SK-N-SH (cell line): ENCODE measurements at regions of chr22 and their contacts with region 1.

Region 1: DNA sequence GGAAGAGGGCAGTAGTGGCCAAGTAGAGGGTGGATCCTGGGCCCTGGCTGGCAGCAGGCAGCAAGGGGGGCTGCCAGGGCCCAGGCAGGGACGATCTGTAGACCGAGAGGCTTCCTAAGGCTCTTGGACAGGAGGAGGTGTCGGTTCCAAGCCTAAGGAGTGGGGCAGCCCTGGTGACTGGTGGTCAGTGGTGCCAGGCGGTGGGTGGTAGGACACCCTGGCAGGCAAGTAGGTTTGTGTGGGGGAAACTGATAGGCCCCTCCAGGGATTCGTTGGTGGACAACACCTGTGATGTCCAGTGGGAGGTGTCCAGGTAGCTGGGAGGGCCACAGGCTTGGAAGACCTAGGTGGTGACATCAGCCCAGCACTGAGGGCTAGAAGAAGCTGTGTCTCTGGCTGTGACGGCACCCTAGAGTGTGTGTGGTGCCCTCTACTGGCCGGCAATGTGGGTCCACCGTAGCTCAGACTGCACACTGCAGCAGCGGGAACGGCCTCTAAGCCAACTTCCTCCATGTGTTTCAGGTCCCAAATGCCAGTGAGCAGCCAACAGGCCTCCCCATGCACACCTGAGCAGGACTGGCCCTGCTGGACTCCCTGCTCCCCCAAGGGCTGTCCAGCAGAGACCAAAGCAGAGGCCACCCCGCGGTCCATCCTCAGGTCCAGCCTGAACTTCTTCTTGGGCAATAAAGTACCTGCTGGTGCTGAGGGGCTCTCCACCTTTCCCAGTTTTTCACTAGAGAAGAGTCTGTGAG is 9.4 kb upstream of the SAMM50 start:
- DNase-seq: peak; percentile 79
- H3K4me3 ChIP-seq: no peak overlapping the region; a peak in 1 of 4 replicates
- H3K27ac ChIP-seq: no peak overlapping the region
- H3K4me1 ChIP-seq: no peaks in the 10 kb centered on the region; a peak in 1 of 4 replicates
- H3K27me3 ChIP-seq: no peaks in the 10 kb centered on the region
- CTCF ChIP-seq: peak; percentile 79
- EP300 ChIP-seq: no peak
- RAD21 ChIP-seq: peak; percentile 67

Region 2: DNA sequence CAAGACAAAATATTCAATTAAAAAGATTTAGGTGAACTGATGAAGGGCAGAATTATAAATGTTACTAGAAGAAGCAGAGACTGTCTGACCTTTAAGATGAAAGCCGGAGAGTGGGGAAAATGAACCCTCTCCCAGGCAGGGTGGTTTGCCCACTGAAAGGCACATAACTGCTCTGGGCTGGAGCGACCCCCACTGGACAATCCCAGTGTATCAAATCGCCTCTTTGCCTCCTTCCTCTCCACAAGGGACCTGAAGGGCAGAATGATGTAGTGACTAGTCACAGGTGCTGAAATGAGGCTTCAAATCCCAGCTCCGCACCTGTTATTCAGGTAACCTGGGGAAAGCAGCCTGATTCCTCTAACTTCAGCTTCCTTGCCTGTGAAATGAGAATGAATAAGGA is 202.7 kb before region 1 on chr22:
- CTCF ChIA-PET with region 1: no interaction called
- POLR2A ChIA-PET with region 1: no interaction called
- DNase-seq: no peak
- H3K4me3 ChIP-seq: no peak overlapping the region
- H3K27ac ChIP-seq: no peak overlapping the region
- H3K4me1 ChIP-seq: no peaks in the 10 kb centered on the region
- H3K27me3 ChIP-seq: no peaks in the 10 kb centered on the region
- CTCF ChIP-seq: peak; percentile 34
- EP300 ChIP-seq: no peak
- RAD21 ChIP-seq: peak; percentile 26; the same call in 1 of the 2 replicates

Region 3: DNA sequence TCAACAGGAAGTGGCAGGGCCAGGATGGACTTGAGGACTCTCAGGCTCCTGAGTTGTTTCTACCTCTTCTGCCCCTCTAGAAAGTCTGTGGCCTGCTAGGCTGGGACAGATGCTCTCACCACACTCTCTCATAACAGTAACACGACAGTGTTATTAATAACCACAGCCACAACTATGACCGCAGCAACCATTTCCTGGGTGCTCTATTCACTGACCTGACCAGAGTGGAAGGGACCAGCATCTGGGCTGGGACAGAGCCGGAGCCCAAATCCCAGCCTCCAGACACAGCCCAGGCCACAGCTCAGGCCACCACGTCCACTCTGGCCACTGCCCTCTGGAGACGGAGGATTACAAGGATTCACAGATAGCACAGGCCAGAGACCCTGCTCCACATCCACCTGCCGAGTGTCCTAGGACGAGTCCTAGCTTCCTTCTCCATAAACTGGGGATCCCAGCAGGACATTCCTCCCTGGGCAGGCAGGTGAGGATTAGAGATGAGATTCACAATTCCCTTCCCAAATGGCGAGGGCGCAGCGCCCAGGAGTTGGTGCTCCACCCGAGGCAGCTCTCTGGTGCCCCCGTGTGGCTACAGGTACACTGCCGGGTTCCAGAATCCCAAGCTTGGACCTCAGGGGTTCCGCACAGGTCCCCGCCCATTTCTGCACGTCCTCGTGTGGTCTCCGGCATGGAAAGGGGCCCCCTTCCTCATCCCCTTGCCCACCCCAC is 61.0 kb before region 1 on chr22:
- CTCF ChIA-PET with region 1: interaction called, 21 read pairs
- POLR2A ChIA-PET with region 1: no interaction called
- DNase-seq: peak; percentile 75
- H3K4me3 ChIP-seq: no peak overlapping the region; a peak in 1 of 4 replicates
- H3K27ac ChIP-seq: no peak overlapping the region
- H3K4me1 ChIP-seq: no peaks in the 10 kb centered on the region
- H3K27me3 ChIP-seq: no peaks in the 10 kb centered on the region; the same call in 1 of the 2 replicates
- CTCF ChIP-seq: peak; percentile 62
- EP300 ChIP-seq: no peak
- RAD21 ChIP-seq: peak; percentile 63

Region 4: GRCh38 chr22:43897751-43898261 is 48.0 kb before region 1 on chr22:
- CTCF ChIA-PET with region 1: interaction called, 11 read pairs
- POLR2A ChIA-PET with region 1: interaction called, 3 read pairs
- DNase-seq: no peak
- H3K4me3 ChIP-seq: no peak overlapping the region
- H3K27ac ChIP-seq: peak overlapping the region in 1 of 2 experiments; percentile 74; a peak in 2 of 4 replicates
- H3K4me1 ChIP-seq: peaks cover 0 to 20% of the 10 kb centered on the region in 2 experiments; a peak in 2 of 4 replicates
- H3K27me3 ChIP-seq: no peaks in the 10 kb centered on the region
- CTCF ChIP-seq: no peak
- EP300 ChIP-seq: peak in 1 of 2 experiments; percentile 50; a peak in 1 of 4 replicates
- RAD21 ChIP-seq: no peak

Region 5: GRCh38 chr22:43905681-43906080 is 40.1 kb before region 1 on chr22:
- CTCF ChIA-PET with region 1: interaction called, 12 read pairs
- POLR2A ChIA-PET with region 1: no interaction called
- DNase-seq: no peak
- H3K4me3 ChIP-seq: no peak overlapping the region
- H3K27ac ChIP-seq: no peak overlapping the region
- H3K4me1 ChIP-seq: peaks cover 0 to 13% of the 10 kb centered on the region in 2 experiments; a peak in 2 of 4 replicates
- H3K27me3 ChIP-seq: peaks cover 18% of the 10 kb centered on the region; the same call in 1 of the 2 replicates
- CTCF ChIP-seq: no peak
- EP300 ChIP-seq: no peak
- RAD21 ChIP-seq: no peak

Region 6: DNA sequence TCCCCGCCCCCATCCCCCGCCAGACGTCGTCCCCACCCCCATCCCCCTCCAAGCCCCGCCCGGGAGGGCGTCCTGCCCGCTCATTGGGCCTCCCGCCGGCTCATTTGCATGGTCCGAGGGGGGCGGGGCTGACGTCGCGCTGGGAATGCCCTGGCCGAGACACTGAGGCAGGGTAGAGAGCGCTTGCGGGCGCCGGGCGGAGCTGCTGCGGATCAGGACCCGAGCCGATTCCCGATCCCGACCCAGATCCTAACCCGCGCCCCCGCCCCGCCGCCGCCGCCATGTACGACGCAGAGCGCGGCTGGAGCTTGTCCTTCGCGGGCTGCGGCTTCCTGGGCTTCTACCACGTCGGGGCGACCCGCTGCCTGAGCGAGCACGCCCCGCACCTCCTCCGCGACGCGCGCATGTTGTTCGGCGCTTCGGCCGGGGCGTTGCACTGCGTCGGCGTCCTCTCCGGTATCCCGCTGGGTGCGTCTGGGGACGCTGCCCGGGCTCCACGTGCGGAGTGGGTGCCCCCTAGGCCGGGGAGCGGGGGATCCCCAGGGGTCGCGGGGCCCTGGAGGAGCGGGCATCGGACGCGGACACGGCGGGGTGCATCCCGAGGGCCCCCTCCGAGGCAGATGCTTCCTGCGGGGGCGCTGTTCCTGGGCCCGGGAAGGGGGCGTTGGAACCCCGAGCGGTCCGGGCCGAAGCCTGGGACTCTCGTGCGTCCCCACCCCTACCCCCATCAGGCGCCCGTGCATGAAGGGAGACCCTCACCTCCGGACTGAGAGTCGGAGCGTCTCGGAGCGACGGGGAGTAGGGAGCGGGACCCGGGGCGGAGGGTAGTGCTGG is 22.0 kb before region 1 on chr22 and contains the start of gene PNPLA3:
- CTCF ChIA-PET with region 1: interaction called, 23 read pairs
- POLR2A ChIA-PET with region 1: no interaction called
- DNase-seq: peak; percentile 99
- H3K4me3 ChIP-seq: peak within 1 kb of the TSS; percentile 58 to 73
- H3K27ac ChIP-seq: peak within 1 kb of the TSS; percentile 29 to 50; a peak in 3 of 4 replicates
- H3K4me1 ChIP-seq: peaks cover 16 to 19% of the 10 kb centered on the region in 2 experiments; a peak in 3 of 4 replicates
- H3K27me3 ChIP-seq: no peaks in the 10 kb centered on the region
- CTCF ChIP-seq: peak; percentile 54
- EP300 ChIP-seq: no peak
- RAD21 ChIP-seq: no peak
- polyA plus RNA-seq, gene PNPLA3: 2.4 and 3.2 TPM in 2 replicates

Region 7: GRCh38 chr22:43931771-43932170 is 14.0 kb before region 1 on chr22:
- CTCF ChIA-PET with region 1: interaction called, 52 read pairs
- POLR2A ChIA-PET with region 1: no interaction called
- DNase-seq: no peak
- H3K4me3 ChIP-seq: no peak overlapping the region
- H3K27ac ChIP-seq: no peak overlapping the region
- H3K4me1 ChIP-seq: no peaks in the 10 kb centered on the region; a peak in 1 of 4 replicates
- H3K27me3 ChIP-seq: no peaks in the 10 kb centered on the region
- CTCF ChIP-seq: no peak
- EP300 ChIP-seq: no peak
- RAD21 ChIP-seq: no peak

Region 8: GRCh38 chr22:43980996-43981395 is 35.2 kb after region 1 on chr22:
- CTCF ChIA-PET with region 1: no interaction called
- POLR2A ChIA-PET with region 1: no interaction called
- DNase-seq: no peak
- H3K4me3 ChIP-seq: no peak overlapping the region
- H3K27ac ChIP-seq: no peak overlapping the region
- H3K4me1 ChIP-seq: no peaks in the 10 kb centered on the region
- H3K27me3 ChIP-seq: no peaks in the 10 kb centered on the region
- CTCF ChIP-seq: no peak
- EP300 ChIP-seq: no peak
- RAD21 ChIP-seq: no peak

Region 9: DNA sequence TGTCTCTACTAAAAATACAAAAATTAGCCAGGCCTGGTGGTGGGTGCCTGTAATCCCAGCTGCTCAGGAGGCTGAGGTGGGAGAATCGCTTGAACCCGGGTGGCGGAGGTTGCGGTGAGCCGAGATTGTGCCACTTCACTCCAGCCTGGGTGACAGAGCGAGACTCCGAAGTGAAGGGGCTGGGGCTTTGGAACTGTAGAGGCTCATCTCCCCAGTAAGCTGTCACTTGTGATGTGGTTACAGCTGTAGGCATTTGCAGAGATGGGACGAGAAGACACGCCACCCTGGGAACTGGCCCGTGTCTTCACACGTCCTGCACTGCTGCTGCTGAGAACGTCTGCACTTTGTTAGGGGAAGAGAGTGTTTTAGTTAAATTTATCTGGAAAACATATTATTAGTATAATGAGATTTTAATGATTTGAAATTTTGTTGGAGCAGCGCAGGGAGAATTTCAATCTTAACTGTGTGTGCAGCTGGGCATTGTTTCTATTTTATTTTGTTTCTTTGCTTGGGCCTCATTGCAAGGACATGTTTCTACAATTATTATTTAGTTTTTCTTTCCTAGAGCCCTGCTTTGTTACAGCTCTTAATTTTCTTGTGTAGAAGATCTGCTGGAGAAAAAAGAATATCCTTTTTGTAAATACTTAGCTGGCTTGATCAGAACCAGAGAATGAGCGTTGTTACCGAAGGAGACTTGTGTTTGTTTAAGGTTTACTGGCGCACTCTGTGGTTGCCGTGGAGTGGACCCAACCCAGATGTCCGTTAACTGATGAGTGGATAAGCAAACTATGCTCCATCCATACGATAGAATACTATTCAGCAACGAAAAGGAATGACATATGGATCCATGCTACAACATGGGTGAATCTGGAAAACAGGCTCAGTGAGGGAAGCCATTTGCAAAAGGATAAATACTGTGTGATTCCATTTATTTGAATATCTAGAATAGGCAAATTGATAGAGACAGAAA is 96.7 kb after region 1 on chr22:
- CTCF ChIA-PET with region 1: no interaction called
- POLR2A ChIA-PET with region 1: no interaction called
- DNase-seq: no peak
- H3K4me3 ChIP-seq: no peak overlapping the region
- H3K27ac ChIP-seq: no peak overlapping the region
- H3K4me1 ChIP-seq: peaks cover 3 to 13% of the 10 kb centered on the region in 2 experiments; a peak in 2 of 4 replicates
- H3K27me3 ChIP-seq: no peaks in the 10 kb centered on the region
- CTCF ChIP-seq: no peak
- EP300 ChIP-seq: no peak
- RAD21 ChIP-seq: no peak